A549 (cell line): ENCODE measurements at regions of chr11 and their contacts with region 1.

Region 1: DNA sequence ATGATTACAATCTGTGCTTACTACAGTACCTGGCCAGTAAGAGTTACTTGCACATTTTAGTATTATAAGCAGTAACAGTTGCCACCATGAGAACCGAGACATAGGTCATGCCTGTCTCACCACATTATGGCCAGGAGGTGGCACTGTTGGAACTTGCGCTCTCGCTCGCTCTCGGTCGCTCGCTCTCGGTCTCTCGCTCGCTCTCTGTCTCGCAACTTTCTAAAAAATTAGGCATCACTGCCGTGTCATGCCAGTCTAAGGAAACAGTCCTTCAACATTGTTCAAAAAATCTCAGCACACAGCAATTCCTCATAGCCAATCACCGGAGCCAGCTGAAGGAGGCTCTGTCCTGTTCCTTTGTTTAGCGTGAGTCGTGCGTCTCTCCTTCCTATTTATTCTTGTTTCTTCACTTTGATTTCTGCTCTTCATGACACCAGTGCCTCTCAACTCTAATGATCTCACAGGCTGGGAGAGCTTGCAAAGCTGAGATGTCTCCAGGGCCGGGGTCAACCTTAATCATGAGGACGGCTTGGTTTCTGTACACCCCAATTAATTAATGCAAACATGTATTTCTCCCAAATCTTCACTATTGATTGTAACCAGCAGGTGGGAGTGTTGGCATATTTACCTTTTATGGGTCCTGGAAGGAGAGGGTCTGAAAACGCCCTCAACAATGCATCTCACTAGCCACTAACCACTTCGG is 6.3 kb upstream of the ADAMTS8 start:
- DNase-seq: peak; percentile 78 to 79
- ATAC-seq: peak; percentile 85 to 87
- H3K4me3 ChIP-seq: peak overlapping the region; percentile 63
- H3K27ac ChIP-seq: peak overlapping the region; percentile 84 to 87
- H3K4me1 ChIP-seq: peaks cover 12% of the 10 kb centered on the region
- CTCF ChIP-seq: peak; percentile 68
- EP300 ChIP-seq: no peak
- POLR2A ChIP-seq: no peak
- RAD21 ChIP-seq: peak; percentile 85 to 90

Region 2: GRCh38 chr11:130827451-130828377 is 393.0 kb after region 1 on chr11:
- CTCF ChIA-PET with region 1: interaction called, 163 read pairs
- POLR2A ChIA-PET with region 1: no interaction called
- DNase-seq: peak; percentile 69 to 80
- ATAC-seq: peak; percentile 98 to 99
- H3K4me3 ChIP-seq: no peak overlapping the region
- H3K27ac ChIP-seq: peak overlapping the region; percentile 74 to 91
- H3K4me1 ChIP-seq: peaks cover 13% of the 10 kb centered on the region
- CTCF ChIP-seq: peak; percentile 62
- EP300 ChIP-seq: no peak
- POLR2A ChIP-seq: no peak
- RAD21 ChIP-seq: peak; percentile 89 to 93

Region 3: DNA sequence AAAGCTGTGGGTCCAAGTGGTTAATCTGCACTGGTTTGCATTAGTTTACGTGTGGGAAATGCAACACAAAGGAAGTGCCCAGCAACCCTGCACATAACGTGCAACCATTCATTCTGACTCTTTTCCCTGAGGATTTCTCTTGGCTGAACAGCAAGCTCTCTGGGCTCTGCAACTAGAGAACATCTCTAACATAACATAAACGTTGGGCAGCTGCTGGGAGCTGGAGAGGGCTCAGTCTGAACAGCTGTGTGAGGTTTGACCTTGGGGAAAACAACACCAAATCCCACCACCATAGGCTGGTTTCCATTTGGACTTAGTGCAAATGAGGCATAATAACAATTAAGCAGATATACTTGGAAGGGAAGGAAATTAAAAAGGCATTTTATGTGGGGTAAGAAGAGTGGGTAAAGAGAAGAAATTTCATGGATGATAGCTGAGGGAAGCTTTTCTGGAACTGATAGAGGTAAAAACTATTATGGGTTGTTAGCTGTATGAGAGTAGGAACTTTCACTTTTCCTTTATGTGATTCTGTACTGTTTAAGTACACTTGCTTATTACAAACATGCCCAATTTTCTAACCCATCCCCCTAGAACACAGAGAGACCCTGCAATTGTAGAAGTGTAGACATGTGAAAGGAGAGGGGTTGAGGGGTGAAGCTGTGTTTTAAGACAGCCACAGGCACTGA is 405.5 kb after region 1 on chr11:
- CTCF ChIA-PET with region 1: interaction called, 22 read pairs
- POLR2A ChIA-PET with region 1: no interaction called
- DNase-seq: no peak
- ATAC-seq: no peak
- H3K4me3 ChIP-seq: no peak overlapping the region
- H3K27ac ChIP-seq: no peak overlapping the region
- H3K4me1 ChIP-seq: no peaks in the 10 kb centered on the region
- CTCF ChIP-seq: no peak
- EP300 ChIP-seq: no peak
- POLR2A ChIP-seq: no peak
- RAD21 ChIP-seq: no peak

Region 4: DNA sequence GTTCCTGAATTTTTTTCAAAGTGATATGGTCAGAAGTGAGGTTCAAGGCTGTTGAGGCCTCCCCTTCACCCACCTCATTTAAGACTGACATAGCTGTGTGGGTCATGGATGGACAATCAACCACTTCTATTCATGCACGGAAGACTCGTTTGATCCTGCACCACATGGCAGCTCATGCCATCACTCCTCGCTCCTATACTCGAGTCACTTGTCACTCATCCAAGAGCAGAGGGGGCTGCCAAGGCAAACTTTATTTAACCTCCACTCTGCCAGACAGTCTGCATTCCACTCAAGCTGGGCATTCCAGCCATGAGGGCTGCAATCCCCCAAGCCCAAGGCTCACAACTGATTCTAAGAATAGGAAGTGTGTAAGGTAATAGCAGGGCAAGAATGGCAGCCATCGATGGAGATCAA is 447.5 kb after region 1 on chr11:
- CTCF ChIA-PET with region 1: interaction called, 732 read pairs
- POLR2A ChIA-PET with region 1: no interaction called
- DNase-seq: no peak
- ATAC-seq: no peak
- H3K4me3 ChIP-seq: no peak overlapping the region
- H3K27ac ChIP-seq: no peak overlapping the region
- H3K4me1 ChIP-seq: no peaks in the 10 kb centered on the region
- CTCF ChIP-seq: no peak
- EP300 ChIP-seq: no peak
- POLR2A ChIP-seq: no peak
- RAD21 ChIP-seq: no peak

Region 5: GRCh38 chr11:130894322-130895025 is 459.8 kb after region 1 on chr11:
- CTCF ChIA-PET with region 1: interaction called, 119 read pairs
- POLR2A ChIA-PET with region 1: no interaction called
- DNase-seq: peak; percentile 20 to 66
- ATAC-seq: peak; percentile 75 to 89; a peak in 4 of 6 replicates
- H3K4me3 ChIP-seq: no peak overlapping the region
- H3K27ac ChIP-seq: 0 out of 6 replicates have a peak overlapping the region, but pooled peaks of 1 of the 2 experiments have one; percentile 22
- H3K4me1 ChIP-seq: peaks cover 18% of the 10 kb centered on the region; the same call in 2 of the 3 replicates
- CTCF ChIP-seq: peak; percentile 65
- EP300 ChIP-seq: no peak
- POLR2A ChIP-seq: no peak
- RAD21 ChIP-seq: peak; percentile 61 to 69; a peak in 4 of 5 replicates